ENCODE measurements at regions of chr11 and their contacts with region 1.

Region 1: DNA sequence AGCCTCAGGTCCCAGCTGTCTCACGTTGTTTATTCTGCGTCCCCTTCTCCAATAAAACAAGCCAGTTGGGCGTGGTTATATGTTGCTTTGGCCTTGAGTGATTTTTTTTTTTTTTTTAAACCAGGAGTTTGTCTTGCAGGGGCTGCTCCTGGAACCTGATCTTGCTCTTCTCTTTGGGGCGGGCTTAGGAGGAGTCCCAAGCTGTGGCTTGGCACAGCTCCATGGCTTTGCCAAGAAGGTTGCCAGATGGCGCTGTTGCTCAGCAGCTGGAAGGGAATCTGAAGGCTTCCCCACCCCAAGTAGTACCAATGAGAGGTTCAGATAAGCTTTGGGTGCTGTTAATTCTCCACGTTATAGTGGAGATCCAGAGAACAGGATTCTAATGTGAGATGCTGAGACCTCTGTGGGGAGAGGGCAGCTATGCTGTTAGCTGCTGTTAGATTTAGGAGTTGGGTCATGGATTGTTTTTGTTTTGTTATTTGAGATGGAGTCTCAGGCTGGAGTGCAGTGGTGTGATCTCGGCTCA is 2.0 kb upstream of the FERMT3 start:
- DNase-seq: peak; percentile 77 to 95 (median 84)
- ATAC-seq: peak; percentile 63
- H3K4me3 ChIP-seq: no peak overlapping the region
- H3K4me3 Mint-ChIP-seq: peak overlapping the region; percentile 93
- H3K27ac ChIP-seq: no peak overlapping the region
- H3K27ac Mint-ChIP-seq: peak overlapping the region; percentile 78
- H3K4me1 ChIP-seq: peaks cover 50% of the 10 kb centered on the region
- H3K4me1 Mint-ChIP-seq: peaks cover 49% of the 10 kb centered on the region
- H3K27me3 ChIP-seq: no peaks in the 10 kb centered on the region
- H3K27me3 Mint-ChIP-seq: no peaks in the 10 kb centered on the region
- CTCF ChIP-seq: peak; percentile 69

Region 2: GRCh38 chr11:64185816-64186498 is 18.6 kb before region 1 on chr11 and contains the start of gene STIP1:
- CTCF ChIA-PET with region 1: interaction called, 47 read pairs
- POLR2A ChIA-PET with region 1: interaction called, 88 read pairs
- intact Hi-C with region 1: loop called (anchors 1 to 2 kb)
- DNase-seq: peak in 13 of 14 experiments; percentile 94 to 100 (median 97)
- ATAC-seq: peak; percentile 87
- H3K4me3 ChIP-seq: peak within 1 kb of the TSS; percentile 80
- H3K4me3 Mint-ChIP-seq: peak within 1 kb of the TSS; percentile 99
- H3K27ac ChIP-seq: peak within 1 kb of the TSS; percentile 47 to 57
- H3K27ac Mint-ChIP-seq: no peak within 1 kb of the TSS
- H3K4me1 ChIP-seq: peaks cover 41% of the 10 kb centered on the region
- H3K4me1 Mint-ChIP-seq: peaks cover 45% of the 10 kb centered on the region
- H3K27me3 ChIP-seq: no peaks in the 10 kb centered on the region
- H3K27me3 Mint-ChIP-seq: no peaks in the 10 kb centered on the region
- CTCF ChIP-seq: peak; percentile 15
- total RNA-seq, gene STIP1: 29.0 to 37.5 TPM

Region 3: GRCh38 chr11:64225612-64226506 is 21.3 kb after region 1 on chr11 and contains the starts of genes NUDT22 and TRPT1:
- CTCF ChIA-PET with region 1: interaction called, 15 read pairs
- POLR2A ChIA-PET with region 1: interaction called, 116 read pairs
- intact Hi-C with region 1: loop called (anchors 1 to 2 kb)
- DNase-seq: peak; percentile 79 to 96 (median 91)
- ATAC-seq: peak; percentile 67
- H3K4me3 ChIP-seq: peak within 1 kb of the TSS; percentile 99
- H3K4me3 Mint-ChIP-seq: peak within 1 kb of the TSS; percentile 97
- H3K27ac ChIP-seq: peak within 1 kb of the TSS; percentile 77 to 87
- H3K27ac Mint-ChIP-seq: peak within 1 kb of the TSS; percentile 87
- H3K4me1 ChIP-seq: peaks cover 57% of the 10 kb centered on the region
- H3K4me1 Mint-ChIP-seq: peaks cover 39% of the 10 kb centered on the region
- H3K27me3 ChIP-seq: no peaks in the 10 kb centered on the region
- H3K27me3 Mint-ChIP-seq: no peaks in the 10 kb centered on the region
- CTCF ChIP-seq: peak; percentile 7
- total RNA-seq, gene NUDT22: 26.8 to 26.9 TPM
- total RNA-seq, gene TRPT1: 11.3 to 11.5 TPM

Region 4: DNA sequence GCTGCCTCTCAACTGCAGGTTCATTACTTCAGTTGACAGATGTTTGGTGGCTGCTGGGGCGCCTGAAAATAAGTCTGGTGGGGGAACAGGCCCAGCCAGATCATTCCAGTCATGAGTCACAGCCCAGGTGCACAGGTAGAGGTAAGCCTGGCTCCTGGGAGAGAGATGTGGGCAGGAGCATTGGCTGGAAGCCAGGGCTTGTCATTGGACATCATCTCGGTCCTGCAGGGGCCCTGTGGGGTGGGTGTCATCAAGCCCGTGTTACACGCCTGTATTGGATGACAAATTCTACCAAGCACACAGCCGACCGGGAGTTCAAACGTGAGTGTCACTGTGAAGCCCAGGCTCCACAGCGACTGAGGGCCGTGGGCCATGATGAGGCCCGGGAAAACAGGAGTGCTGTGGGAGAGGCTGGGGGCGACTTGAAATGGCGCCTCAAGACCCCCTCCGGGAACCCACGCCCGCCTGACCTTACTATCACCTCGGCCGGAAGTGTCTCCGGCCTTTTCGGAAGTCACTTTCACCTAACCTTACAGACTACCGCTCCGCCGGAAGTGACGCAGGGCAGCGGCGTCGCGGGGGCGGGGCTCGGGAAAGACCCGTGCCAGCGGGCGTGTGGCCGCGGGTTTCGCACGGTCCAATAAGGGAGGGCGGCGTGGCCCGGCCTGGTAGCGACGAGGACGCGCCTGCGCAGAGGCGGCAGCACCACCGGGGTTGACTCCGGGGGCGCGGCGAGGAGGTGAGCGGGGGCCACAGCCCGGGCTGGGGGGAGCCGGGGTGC is 36.1 kb after region 1 on chr11 and contains the start of gene FKBP2:
- CTCF ChIA-PET with region 1: interaction called, 15 read pairs
- POLR2A ChIA-PET with region 1: interaction called, 65 read pairs
- intact Hi-C with region 1: loop called (anchors 5 kb)
- DNase-seq: peak; percentile 92 to 100 (median 97)
- ATAC-seq: peak; percentile 66
- H3K4me3 ChIP-seq: peak within 1 kb of the TSS; percentile 80
- H3K4me3 Mint-ChIP-seq: peak within 1 kb of the TSS; percentile 98
- H3K27ac ChIP-seq: peak within 1 kb of the TSS; percentile 97 to 100
- H3K27ac Mint-ChIP-seq: peak within 1 kb of the TSS; percentile 100
- H3K4me1 ChIP-seq: peaks cover 59% of the 10 kb centered on the region
- H3K4me1 Mint-ChIP-seq: peaks cover 40% of the 10 kb centered on the region
- H3K27me3 ChIP-seq: no peaks in the 10 kb centered on the region
- H3K27me3 Mint-ChIP-seq: no peaks in the 10 kb centered on the region
- CTCF ChIP-seq: no peak
- total RNA-seq, gene FKBP2: 11.2 to 14.6 TPM

Region 5: GRCh38 chr11:64652586-64653387 is 448.3 kb after region 1 on chr11:
- CTCF ChIA-PET with region 1: no interaction called
- POLR2A ChIA-PET with region 1: no interaction called
- intact Hi-C with region 1: loop called in 1 of 2 experiments (anchors 5 kb)
- DNase-seq: peak; percentile 51 to 80 (median 68)
- ATAC-seq: peak; percentile 87
- H3K4me3 ChIP-seq: no peak overlapping the region
- H3K4me3 Mint-ChIP-seq: no peak overlapping the region
- H3K27ac ChIP-seq: no peak overlapping the region
- H3K27ac Mint-ChIP-seq: no peak overlapping the region
- H3K4me1 ChIP-seq: peaks cover 14% of the 10 kb centered on the region
- H3K4me1 Mint-ChIP-seq: no peaks in the 10 kb centered on the region
- H3K27me3 ChIP-seq: peaks cover 0 to 4% of the 10 kb centered on the region in 2 experiments
- H3K27me3 Mint-ChIP-seq: peaks cover 13% of the 10 kb centered on the region
- CTCF ChIP-seq: peak; percentile 70